ENCODE measurements at regions of chr22 and their contacts with region 1.

Region 1: GRCh38 chr22:23888615-23889401 is 5.4 kb upstream of the MIF start:
- DNase-seq: no peak
- ATAC-seq: no peak
- H3K4me3 ChIP-seq: no peak overlapping the region
- H3K4me3 Mint-ChIP-seq: no peak overlapping the region
- H3K27ac ChIP-seq: no peak overlapping the region
- H3K27ac Mint-ChIP-seq: no peak overlapping the region
- H3K4me1 ChIP-seq: peaks cover 5 to 8% of the 10 kb centered on the region in 2 donors
- H3K4me1 Mint-ChIP-seq: peaks cover 7% of the 10 kb centered on the region
- H3K27me3 ChIP-seq: no peaks in the 10 kb centered on the region
- H3K27me3 Mint-ChIP-seq: no peaks in the 10 kb centered on the region
- CTCF ChIP-seq: no peak

Region 2: DNA sequence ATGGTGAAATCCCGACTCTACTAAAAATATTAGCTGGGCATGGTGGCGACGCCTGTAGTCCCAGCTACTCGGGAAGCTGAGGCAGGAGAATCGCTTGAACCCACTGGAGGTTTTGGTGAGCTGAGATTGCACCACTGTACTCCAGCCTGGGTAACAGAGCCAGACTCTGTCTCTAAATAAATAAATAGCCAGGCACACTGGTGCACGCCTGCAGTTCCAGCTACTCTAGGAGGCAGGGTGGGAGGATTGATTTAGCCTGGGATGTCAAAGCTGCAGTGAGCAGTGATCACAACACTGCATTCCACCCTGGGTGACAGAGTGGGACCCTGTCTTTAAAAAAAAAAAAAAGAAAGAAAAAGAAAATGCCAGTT is 309.9 kb after region 1 on chr22:
- CTCF ChIA-PET with region 1: no interaction called
- POLR2A ChIA-PET with region 1: interaction called, 14 read pairs
- intact Hi-C with region 1: no loop called
- DNase-seq: no peak
- ATAC-seq: no peak
- H3K4me3 ChIP-seq: no peak overlapping the region
- H3K4me3 Mint-ChIP-seq: no peak overlapping the region
- H3K27ac ChIP-seq: no peak overlapping the region
- H3K27ac Mint-ChIP-seq: no peak overlapping the region
- H3K4me1 ChIP-seq: peaks cover 6 to 8% of the 10 kb centered on the region in 2 donors
- H3K4me1 Mint-ChIP-seq: peaks cover 7% of the 10 kb centered on the region
- H3K27me3 ChIP-seq: no peaks in the 10 kb centered on the region
- H3K27me3 Mint-ChIP-seq: peaks cover 4% of the 10 kb centered on the region
- CTCF ChIP-seq: no peak

Measured in B cell (primary cell).